ENCODE measurements at regions of chr11 and their contacts with region 1.

Region 1: GRCh38 chr11:36131721-36132397 is 157.4 kb downstream of the COMMD9 start:
- DNase-seq: peak; percentile 24 to 68
- ATAC-seq: peak; percentile 77 to 92 (median 83)
- H3K4me3 ChIP-seq: no peak overlapping the region
- H3K27ac ChIP-seq: peak overlapping the region in 2 of 10 donors; percentile 15 to 44
- H3K4me1 ChIP-seq: peaks cover 0 to 15% (median 0%) of the 10 kb centered on the region in 9 donors
- H3K27me3 ChIP-seq: peaks cover 0 to 22% (median 6%) of the 10 kb centered on the region in 7 donors
- CTCF ChIP-seq: peak; percentile 47 to 87 (median 75)

Region 2: GRCh38 chr11:35822815-35823495 is 308.9 kb before region 1 on chr11:
- intact Hi-C with region 1: loop called in 8 of 10 experiments (anchors 2 to 10 kb)
- DNase-seq: no peak
- ATAC-seq: no peak
- H3K4me3 ChIP-seq: no peak overlapping the region
- H3K27ac ChIP-seq: no peak overlapping the region
- H3K4me1 ChIP-seq: peaks cover 0 to 34% (median 25%) of the 10 kb centered on the region in 9 donors
- H3K27me3 ChIP-seq: no peaks in the 10 kb centered on the region
- CTCF ChIP-seq: no peak

Region 3: GRCh38 chr11:35943713-35944655 is 187.9 kb before region 1 on chr11 and contains the start of gene LDLRAD3:
- intact Hi-C with region 1: loop called in 1 of 10 experiments (anchors 10 kb)
- DNase-seq: peak; percentile 60 to 84
- ATAC-seq: peak; percentile 86 to 95 (median 92)
- H3K4me3 ChIP-seq: peak within 1 kb of the TSS; percentile 36 to 69 (median 61)
- H3K27ac ChIP-seq: peak within 1 kb of the TSS in 9 of 10 donors; percentile 15 to 85 (median 53)
- H3K4me1 ChIP-seq: peaks cover 0 to 23% (median 17%) of the 10 kb centered on the region in 9 donors
- H3K27me3 ChIP-seq: peaks cover 0 to 15% (median 0%) of the 10 kb centered on the region in 7 donors
- CTCF ChIP-seq: no peak
- total RNA-seq, gene LDLRAD3: 0.87 to 5.1 (median 1.7) TPM

Region 4: DNA sequence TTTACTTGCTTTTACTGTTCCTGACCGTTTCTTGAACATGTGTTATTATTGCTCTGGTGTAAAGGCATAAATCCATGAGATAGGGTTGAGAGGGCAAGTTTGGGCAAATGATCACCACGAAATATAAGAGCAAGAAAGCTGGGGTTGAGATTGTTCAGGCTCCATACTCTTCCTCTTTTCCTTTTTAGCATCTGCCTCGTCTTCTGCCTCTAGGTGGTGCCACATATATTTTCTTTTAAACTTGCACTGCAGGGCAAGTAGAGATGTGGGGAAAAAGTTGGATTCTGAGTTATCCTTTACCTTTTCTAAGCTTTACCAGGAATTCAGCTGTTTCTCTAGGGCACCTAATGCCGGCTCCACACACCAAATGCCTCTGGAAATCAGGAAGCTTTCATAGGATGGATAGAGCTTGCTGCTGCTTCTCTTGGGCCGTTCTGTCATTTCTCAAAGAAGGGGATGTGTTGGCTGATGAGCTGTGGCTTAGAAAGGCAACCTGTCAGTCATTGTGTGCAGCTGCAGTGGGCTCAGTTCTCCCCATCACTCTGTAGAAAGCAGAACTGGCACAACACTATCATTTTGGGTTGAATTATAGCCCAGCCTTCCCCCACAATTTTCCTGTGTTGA is 89.8 kb before region 1 on chr11:
- intact Hi-C with region 1: loop called in 5 of 10 experiments (anchors 5 to 10 kb)
- DNase-seq: no peak
- ATAC-seq: peak in 2 of 8 donors; percentile 50 to 58
- H3K4me3 ChIP-seq: no peak overlapping the region
- H3K27ac ChIP-seq: no peak overlapping the region
- H3K4me1 ChIP-seq: peaks cover 0 to 7% (median 0%) of the 10 kb centered on the region in 9 donors
- H3K27me3 ChIP-seq: no peaks in the 10 kb centered on the region
- CTCF ChIP-seq: peak; percentile 15 to 64 (median 53)

Region 5: DNA sequence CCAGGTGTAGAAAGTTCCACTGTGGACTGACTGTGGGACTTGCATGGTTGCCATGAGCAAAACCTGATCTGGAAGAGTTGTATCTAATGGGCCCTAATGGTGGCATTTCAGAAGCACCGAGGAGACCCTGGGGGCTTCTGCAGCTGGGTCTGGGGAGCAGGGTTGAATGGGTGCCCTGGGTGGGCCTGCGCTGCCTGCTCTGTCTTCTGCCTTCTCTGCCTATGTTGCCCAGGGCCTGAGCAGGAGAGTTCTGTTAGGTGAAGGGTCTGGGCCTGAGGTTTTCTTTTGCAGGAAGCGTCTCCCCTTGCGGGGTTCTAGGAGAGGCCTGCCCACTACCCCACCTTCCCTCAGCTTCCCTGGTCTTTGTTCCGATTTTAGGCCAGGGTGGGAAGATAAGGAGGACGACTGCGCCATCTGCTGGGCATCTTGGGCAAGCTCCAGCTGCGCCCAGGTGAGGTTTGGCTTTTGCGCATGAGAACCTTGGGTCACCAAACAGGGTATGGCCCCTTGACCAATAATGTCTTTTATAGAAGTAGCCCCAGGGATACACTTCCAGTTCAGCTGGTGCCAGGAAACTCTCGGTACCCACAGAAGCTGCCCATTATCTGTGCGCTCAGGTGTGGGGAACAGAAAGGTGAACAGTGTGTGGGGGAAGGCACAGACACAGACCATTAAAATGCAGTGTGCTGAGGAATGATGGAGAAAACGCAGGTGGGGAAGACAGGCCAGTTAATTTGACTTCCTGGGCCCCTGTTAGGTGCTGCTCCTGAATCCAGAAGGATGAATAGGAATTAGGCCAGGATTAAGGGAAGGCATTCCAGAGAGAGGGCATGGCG is 134.2 kb after region 1 on chr11:
- intact Hi-C with region 1: loop called in 3 of 10 experiments (anchors 10 kb)
- DNase-seq: peak; percentile 20 to 56
- ATAC-seq: peak; percentile 53 to 78 (median 66)
- H3K4me3 ChIP-seq: no peak overlapping the region
- H3K27ac ChIP-seq: no peak overlapping the region
- H3K4me1 ChIP-seq: peaks cover 0 to 6% (median 0%) of the 10 kb centered on the region in 9 donors
- H3K27me3 ChIP-seq: peaks cover 0 to 24% (median 0%) of the 10 kb centered on the region in 7 donors
- CTCF ChIP-seq: peak; percentile 48 to 88 (median 77)

Measured in heart right ventricle (tissue), 16 donors.